ENCODE measurements at regions of chr1 and their contacts with region 1.

Region 1: GRCh38 chr1:202888531-202889360 is at the start of gene RABIF:
- DNase-seq: peak; percentile 96
- H3K4me3 Mint-ChIP-seq: peak within 1 kb of the TSS; percentile 97
- H3K27ac Mint-ChIP-seq: peak within 1 kb of the TSS; percentile 99
- H3K4me1 Mint-ChIP-seq: peaks cover 16% of the 10 kb centered on the region
- H3K27me3 Mint-ChIP-seq: no peaks in the 10 kb centered on the region
- total RNA-seq, gene RABIF: 13.1 and 15.5 TPM in 2 replicates

Region 2: GRCh38 chr1:202810615-202811295 is 78.0 kb before region 1 on chr1 and contains the start of gene PCAT6:
- intact Hi-C with region 1: loop called (anchors 1 kb)
- DNase-seq: peak; percentile 85
- H3K4me3 Mint-ChIP-seq: peak within 1 kb of the TSS; percentile 92
- H3K27ac Mint-ChIP-seq: peak within 1 kb of the TSS; percentile 80
- H3K4me1 Mint-ChIP-seq: peaks cover 35% of the 10 kb centered on the region
- H3K27me3 Mint-ChIP-seq: peaks cover 20% of the 10 kb centered on the region
- total RNA-seq, gene PCAT6: 1.6 TPM in 2 replicates

Region 3: GRCh38 chr1:202957733-202958543 is 69.2 kb after region 1 on chr1 and contains the start of gene ADIPOR1:
- intact Hi-C with region 1: loop called (anchors 2 kb)
- DNase-seq: peak; percentile 92
- H3K4me3 Mint-ChIP-seq: peak within 1 kb of the TSS; percentile 94
- H3K27ac Mint-ChIP-seq: peak within 1 kb of the TSS; percentile 58
- H3K4me1 Mint-ChIP-seq: peaks cover 29% of the 10 kb centered on the region
- H3K27me3 Mint-ChIP-seq: no peaks in the 10 kb centered on the region
- total RNA-seq, gene ADIPOR1: 79.1 and 79.2 TPM in 2 replicates

Region 4: GRCh38 chr1:203006948-203007871 is 118.5 kb after region 1 on chr1 and contains the start of gene TMEM183A:
- intact Hi-C with region 1: loop called (anchors 5 kb)
- DNase-seq: peak; percentile 95
- H3K4me3 Mint-ChIP-seq: peak within 1 kb of the TSS; percentile 88
- H3K27ac Mint-ChIP-seq: peak within 1 kb of the TSS; percentile 93
- H3K4me1 Mint-ChIP-seq: peaks cover 27% of the 10 kb centered on the region
- H3K27me3 Mint-ChIP-seq: no peaks in the 10 kb centered on the region
- total RNA-seq, gene TMEM183A: 74.7 and 75.8 TPM in 2 replicates

Measured in activated T-helper 2 cell treated with anti-CD3 and anti-CD28 coated beads, Interferon-gamma antibody, Interleukin-2, Interleukin-4, amounts not matched to agents 10 μg/mL and 5 μg/mL and 100 μg/mL, durations not matched to agents 14 hours and 24 hours and 36 hours (primary cell).